ENCODE measurements at regions of chr4 and their contacts with region 1.

Region 1: GRCh38 chr4:181528570-181529184 is 714.5 kb upstream of the TENM3 start:
- DNase-seq: peak; percentile 81
- H3K4me3 ChIP-seq: no peak overlapping the region
- H3K27ac ChIP-seq: no peak overlapping the region
- H3K4me1 ChIP-seq: no peaks in the 10 kb centered on the region
- H3K27me3 ChIP-seq: no peaks in the 10 kb centered on the region
- CTCF ChIP-seq: peak; percentile 72

Region 2: GRCh38 chr4:181143250-181143854 is 385.3 kb before region 1 on chr4:
- intact Hi-C with region 1: loop called (anchors 2 kb)
- DNase-seq: peak; percentile 71
- H3K4me3 ChIP-seq: no peak overlapping the region
- H3K27ac ChIP-seq: no peak overlapping the region
- H3K4me1 ChIP-seq: no peaks in the 10 kb centered on the region
- H3K27me3 ChIP-seq: no peaks in the 10 kb centered on the region
- CTCF ChIP-seq: peak; percentile 97

Region 3: DNA sequence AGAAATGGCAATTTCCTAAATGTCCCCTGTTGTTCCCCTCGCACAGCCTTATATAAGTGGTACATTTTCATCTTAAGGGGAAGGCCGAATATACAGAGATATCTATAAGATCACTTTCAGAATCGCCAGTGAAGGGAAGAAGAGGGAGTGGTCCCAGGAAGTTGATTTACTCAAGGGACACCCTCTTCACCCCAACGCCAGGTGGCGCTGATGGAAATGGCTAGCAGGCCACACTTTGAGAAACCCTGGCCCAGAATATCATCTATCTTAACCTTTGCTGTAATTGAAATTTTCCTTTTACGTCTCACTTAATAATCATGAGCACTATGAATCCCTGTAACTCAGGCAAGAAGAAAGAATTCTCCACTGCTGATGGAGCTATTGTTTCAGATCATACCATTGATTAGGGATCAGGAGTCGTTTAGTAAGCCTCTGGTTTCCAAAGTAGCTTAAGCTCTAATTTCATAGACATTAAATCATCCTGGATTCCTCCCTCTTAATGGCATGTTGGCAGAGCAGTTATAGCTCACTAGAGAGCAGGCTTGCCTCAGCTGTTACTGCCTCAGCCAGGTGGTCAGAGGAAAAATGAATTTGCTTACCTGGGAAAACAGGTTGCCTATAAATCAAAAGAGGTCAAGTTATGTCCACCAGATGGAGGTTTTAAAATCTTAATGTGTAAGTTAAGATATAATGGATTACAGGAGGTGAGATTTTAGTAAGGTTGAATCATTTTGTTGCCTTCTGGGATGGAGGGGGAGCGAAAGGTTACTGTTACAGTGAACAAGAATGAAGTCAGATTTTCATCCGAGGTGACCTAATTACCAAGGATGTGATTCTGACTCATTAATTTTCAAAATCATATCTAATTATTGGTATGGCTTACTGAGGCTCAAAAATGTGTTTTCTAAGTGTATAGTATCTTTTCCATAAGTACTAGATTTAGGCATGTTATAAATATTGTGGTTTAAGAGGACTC is 226.7 kb before region 1 on chr4:
- intact Hi-C with region 1: loop called (anchors 2 kb)
- DNase-seq: peak; percentile 44
- H3K4me3 ChIP-seq: no peak overlapping the region
- H3K27ac ChIP-seq: no peak overlapping the region
- H3K4me1 ChIP-seq: no peaks in the 10 kb centered on the region
- H3K27me3 ChIP-seq: no peaks in the 10 kb centered on the region
- CTCF ChIP-seq: peak; percentile 45

Region 4: DNA sequence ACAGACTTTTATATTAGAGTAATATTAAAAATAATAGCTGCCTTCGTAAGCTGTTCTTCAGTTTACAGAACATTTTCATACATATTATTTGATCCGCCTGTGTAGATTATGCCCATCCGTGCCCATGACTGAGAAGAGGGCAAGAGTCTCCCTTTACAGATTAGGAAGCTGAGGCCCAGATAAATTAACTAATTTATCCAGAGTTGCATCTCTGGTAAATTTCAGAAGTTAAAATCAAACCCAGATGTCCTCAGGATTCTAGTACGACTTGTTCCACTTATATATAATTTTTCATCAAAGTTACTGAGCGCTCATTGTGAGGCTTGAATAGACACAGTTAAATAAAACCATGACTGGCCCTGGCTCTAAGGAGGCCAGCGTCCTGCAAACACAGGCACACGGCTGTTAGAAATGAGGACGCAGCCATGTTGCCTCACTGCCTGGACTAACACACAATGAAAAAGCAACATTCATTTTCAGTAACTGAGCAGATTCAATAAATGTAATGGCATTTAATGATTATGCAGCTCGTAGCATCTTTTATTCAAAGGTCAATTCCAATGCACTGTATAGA is 862.5 kb after region 1 on chr4:
- intact Hi-C with region 1: no loop called
- DNase-seq: no peak
- H3K4me3 ChIP-seq: no peak overlapping the region
- H3K27ac ChIP-seq: no peak overlapping the region
- H3K4me1 ChIP-seq: no peaks in the 10 kb centered on the region
- H3K27me3 ChIP-seq: no peaks in the 10 kb centered on the region
- CTCF ChIP-seq: no peak